ENCODE measurements at regions of chr10 and their contacts with region 1.

Region 1: DNA sequence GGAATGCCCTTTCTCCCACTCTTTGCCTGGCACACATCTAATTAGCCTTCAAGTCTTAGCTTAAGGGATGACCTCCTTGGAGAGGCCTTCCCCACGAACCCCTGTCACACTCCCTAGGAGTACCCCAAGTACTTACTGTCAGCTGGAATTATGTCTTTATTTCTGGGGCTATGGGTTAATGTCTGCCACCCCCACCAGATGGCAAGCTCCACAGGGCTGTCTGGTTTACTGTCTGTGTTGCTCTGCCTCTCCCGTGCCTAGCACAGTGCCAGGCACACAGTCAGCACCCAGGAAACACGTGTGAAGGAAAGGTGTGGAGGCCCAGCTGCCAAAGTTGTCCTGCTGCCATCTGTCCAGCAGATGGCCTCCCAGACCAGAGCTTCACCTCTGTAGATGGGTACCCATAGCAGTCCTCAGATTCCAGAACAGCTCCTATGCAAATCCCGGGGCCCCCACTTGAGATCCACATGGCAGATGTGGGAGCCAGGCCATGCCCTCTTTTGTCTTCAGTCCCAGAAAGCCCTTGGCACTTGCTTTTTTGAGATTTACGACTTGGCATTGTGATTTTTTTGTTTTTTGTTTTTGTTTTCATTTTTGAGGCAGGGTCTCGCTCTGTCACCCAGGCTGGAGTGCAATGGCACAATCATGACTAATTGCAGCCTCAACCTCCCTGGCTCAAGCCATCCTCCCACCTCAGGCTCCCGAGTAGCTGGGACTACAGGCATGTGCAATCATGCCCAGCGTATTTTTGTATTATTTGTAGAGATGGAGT is 17.2 kb upstream of the PALD1 start:
- DNase-seq: peak; percentile 48
- H3K4me3 ChIP-seq: no peak overlapping the region
- H3K27ac ChIP-seq: no peak overlapping the region
- H3K4me1 ChIP-seq: peaks cover 19% of the 10 kb centered on the region
- H3K27me3 ChIP-seq: peaks cover 3% of the 10 kb centered on the region
- CTCF ChIP-seq: peak; percentile 86 to 88

Region 2: DNA sequence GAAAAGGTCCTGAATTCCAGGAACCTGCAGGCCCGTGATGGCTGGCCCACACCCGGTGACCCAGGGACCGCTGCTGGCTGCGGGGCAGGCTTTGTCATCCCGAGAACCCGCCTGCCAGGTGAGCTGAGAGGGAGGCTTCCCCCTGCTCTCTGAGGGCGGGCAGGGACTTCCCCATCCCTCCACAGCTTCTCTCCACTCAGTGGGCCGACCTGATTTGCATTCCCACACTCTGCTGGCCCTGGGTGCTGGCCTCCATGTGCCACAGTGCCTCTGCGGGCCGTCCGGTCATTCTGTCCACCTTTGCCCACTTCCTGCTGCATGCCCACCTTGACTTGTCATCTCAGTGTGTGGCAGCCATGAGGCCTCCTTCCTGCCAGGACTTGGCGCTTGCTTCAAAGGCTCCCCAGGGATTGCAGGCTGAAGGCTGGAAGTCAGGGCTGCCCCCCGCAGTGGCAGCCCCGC is 52.5 kb after region 1 on chr10:
- CTCF ChIA-PET with region 1: no interaction called
- dilution Hi-C with region 1: no loop called
- in situ Hi-C with region 1: no loop called
- intact Hi-C with region 1: no loop called
- DNase-seq: peak; percentile 23
- H3K4me3 ChIP-seq: no peak overlapping the region
- H3K27ac ChIP-seq: no peak overlapping the region
- H3K4me1 ChIP-seq: peaks cover 3% of the 10 kb centered on the region
- H3K27me3 ChIP-seq: peaks cover 9% of the 10 kb centered on the region
- CTCF ChIP-seq: no peak

Region 3: GRCh38 chr10:70540089-70540788 is 78.8 kb after region 1 on chr10:
- CTCF ChIA-PET with region 1: no interaction called
- dilution Hi-C with region 1: loop called (anchors 10 kb)
- in situ Hi-C with region 1: loop called in 1 of 2 experiments (anchors 5 kb)
- intact Hi-C with region 1: loop called (anchors 1 kb)
- DNase-seq: no peak
- H3K4me3 ChIP-seq: no peak overlapping the region
- H3K27ac ChIP-seq: no peak overlapping the region
- H3K4me1 ChIP-seq: no peaks in the 10 kb centered on the region
- H3K27me3 ChIP-seq: no peaks in the 10 kb centered on the region
- CTCF ChIP-seq: peak; percentile 63 to 78